Caco-2 (cell line): ENCODE measurements at regions of chrX and their contacts with region 1.

Region 1: GRCh38 chrX:46812445-46812844 is 24.4 kb upstream of the RP2 start:
- DNase-seq: peak; percentile 77 to 83
- H3K4me3 ChIP-seq: no peak overlapping the region
- H3K4me3 Mint-ChIP-seq: peak overlapping the region; percentile 61
- H3K27ac Mint-ChIP-seq: peak overlapping the region; percentile 93
- H3K4me1 ChIP-seq: peaks cover 33% of the 10 kb centered on the region
- H3K4me1 Mint-ChIP-seq: peaks cover 26% of the 10 kb centered on the region
- H3K27me3 ChIP-seq: no peaks in the 10 kb centered on the region
- H3K27me3 Mint-ChIP-seq: no peaks in the 10 kb centered on the region
- CTCF ChIP-seq: no peak

Region 2: GRCh38 chrX:46860557-46860956 is 48.1 kb after region 1 on chrX:
- CTCF ChIA-PET with region 1: interaction called, 6 read pairs
- POLR2A ChIA-PET with region 1: no interaction called
- intact Hi-C with region 1: loop called (anchors 1 kb)
- DNase-seq: peak; percentile 34 to 38
- H3K4me3 ChIP-seq: no peak overlapping the region
- H3K4me3 Mint-ChIP-seq: no peak overlapping the region
- H3K27ac Mint-ChIP-seq: no peak overlapping the region
- H3K4me1 ChIP-seq: peaks cover 12% of the 10 kb centered on the region
- H3K4me1 Mint-ChIP-seq: peaks cover 13% of the 10 kb centered on the region
- H3K27me3 ChIP-seq: no peaks in the 10 kb centered on the region
- H3K27me3 Mint-ChIP-seq: no peaks in the 10 kb centered on the region
- CTCF ChIP-seq: no peak